ENCODE measurements at regions of chr12 and their contacts with region 1.

Region 1: DNA sequence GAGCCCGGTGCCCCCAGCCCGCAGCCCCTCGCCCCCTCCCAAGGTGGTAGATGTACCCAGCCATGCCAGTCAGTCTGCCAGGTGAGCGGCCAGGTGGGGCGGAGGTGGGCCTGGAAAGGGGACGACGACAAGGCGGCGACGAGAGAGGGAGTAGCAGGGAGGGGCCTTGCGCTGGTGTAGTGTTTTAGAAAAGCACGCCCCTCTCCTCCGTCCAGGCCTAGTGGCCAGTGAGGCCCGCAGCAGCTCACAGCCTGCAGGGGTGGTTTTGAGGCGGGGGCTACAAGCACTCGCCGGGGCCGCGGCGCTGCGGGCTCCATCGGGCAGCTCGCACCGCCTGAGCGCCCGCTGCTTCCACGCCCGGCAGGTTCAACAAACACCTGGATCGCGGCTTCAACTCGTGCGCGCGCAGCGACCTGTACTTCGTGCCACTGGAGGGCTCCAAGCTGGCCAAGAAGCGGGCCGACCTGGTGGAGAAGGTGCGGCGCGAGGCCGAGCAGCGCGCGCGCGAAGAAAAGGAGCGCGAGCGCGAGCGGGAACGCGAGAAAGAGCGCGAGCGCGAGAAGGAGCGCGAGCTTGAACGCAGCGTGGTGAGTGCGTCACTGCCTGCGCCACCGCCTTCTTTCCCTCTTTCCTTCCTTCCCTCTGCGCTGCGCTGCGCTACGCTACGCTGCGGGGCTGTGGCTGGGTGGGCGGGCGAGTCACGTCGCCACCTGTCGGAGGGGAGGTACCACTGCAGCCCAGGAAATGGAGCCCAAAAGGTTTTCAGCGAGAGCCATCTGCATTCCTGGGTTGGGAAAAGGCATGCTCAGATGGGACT is 5.9 kb upstream of the RNU7-1 start:
- DNase-seq: peak; percentile 92 to 96 (median 95)
- H3K4me3 ChIP-seq: peak overlapping the region; percentile 47 to 82
- H3K4me3 Mint-ChIP-seq: peak overlapping the region; percentile 80 to 88 (median 84)
- H3K27ac ChIP-seq: peak overlapping the region; percentile 95
- H3K27ac Mint-ChIP-seq: peak overlapping the region; percentile 93 to 99 (median 94)
- H3K4me1 ChIP-seq: peaks cover 29% of the 10 kb centered on the region
- H3K4me1 Mint-ChIP-seq: peaks cover 20 to 48% (median 35%) of the 10 kb centered on the region in 4 donors
- H3K27me3 ChIP-seq: no peaks in the 10 kb centered on the region
- H3K27me3 Mint-ChIP-seq: no peaks in the 10 kb centered on the region

Region 2: DNA sequence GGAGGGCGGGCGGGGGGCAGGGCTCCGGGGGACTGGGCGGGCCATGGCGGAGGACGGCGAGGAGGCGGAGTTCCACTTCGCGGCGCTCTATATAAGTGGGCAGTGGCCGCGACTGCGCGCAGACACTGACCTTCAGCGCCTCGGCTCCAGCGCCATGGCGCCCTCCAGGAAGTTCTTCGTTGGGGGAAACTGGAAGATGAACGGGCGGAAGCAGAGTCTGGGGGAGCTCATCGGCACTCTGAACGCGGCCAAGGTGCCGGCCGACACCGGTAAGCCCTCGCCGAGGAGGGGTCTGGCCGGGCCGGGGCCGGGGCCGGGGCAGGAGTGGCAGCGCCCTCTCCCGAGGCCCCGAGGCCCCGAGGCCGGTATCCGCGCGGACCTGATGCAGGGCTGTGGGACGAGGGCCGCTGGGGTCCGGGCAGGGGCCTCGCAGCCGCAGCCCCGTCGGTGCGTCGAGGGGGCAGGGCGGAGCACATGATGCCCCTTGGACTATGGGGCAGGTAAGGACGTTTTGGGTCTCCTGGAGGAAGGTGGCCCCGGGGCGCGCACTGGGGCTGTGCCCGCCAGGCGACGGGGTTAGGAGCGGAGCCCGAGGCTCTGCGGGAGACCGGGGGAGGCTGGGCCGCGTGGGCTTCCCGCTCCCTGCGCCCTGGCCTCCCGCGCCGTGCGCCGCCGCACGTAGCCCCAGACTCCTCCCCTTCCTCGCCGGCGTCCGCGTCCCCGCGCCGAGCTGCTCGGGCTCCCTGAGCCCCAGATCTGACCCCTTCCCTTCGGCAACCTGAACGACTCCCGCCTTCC is 70.1 kb before region 1 on chr12 and contains the start of gene TPI1:
- CTCF ChIA-PET with region 1: interaction called, 54 read pairs
- POLR2A ChIA-PET with region 1: interaction called, 70 read pairs
- intact Hi-C with region 1: loop called (anchors 1 kb)
- DNase-seq: peak; percentile 59 to 68 (median 62)
- H3K4me3 ChIP-seq: peak within 1 kb of the TSS; percentile 36 to 67
- H3K4me3 Mint-ChIP-seq: peak within 1 kb of the TSS; percentile 89 to 96 (median 92)
- H3K27ac ChIP-seq: peak within 1 kb of the TSS; percentile 69
- H3K27ac Mint-ChIP-seq: peak within 1 kb of the TSS; percentile 91 to 97 (median 93)
- H3K4me1 ChIP-seq: peaks cover 51% of the 10 kb centered on the region
- H3K4me1 Mint-ChIP-seq: peaks cover 33 to 58% (median 48%) of the 10 kb centered on the region in 4 donors
- H3K27me3 ChIP-seq: no peaks in the 10 kb centered on the region
- H3K27me3 Mint-ChIP-seq: no peaks in the 10 kb centered on the region
- total RNA-seq, gene TPI1: 155 to 164 TPM

Region 3: GRCh38 chr12:6890789-6891645 is 46.7 kb before region 1 on chr12:
- CTCF ChIA-PET with region 1: no interaction called
- POLR2A ChIA-PET with region 1: interaction called, 20 read pairs
- intact Hi-C with region 1: no loop called
- DNase-seq: peak; percentile 97 to 98 (median 98)
- H3K4me3 ChIP-seq: peak overlapping the region; percentile 74 to 93
- H3K4me3 Mint-ChIP-seq: peak overlapping the region; percentile 82 to 87 (median 85)
- H3K27ac ChIP-seq: peak overlapping the region; percentile 91
- H3K27ac Mint-ChIP-seq: peak overlapping the region; percentile 92 to 98 (median 95)
- H3K4me1 ChIP-seq: peaks cover 16% of the 10 kb centered on the region
- H3K4me1 Mint-ChIP-seq: peaks cover 5 to 15% (median 11%) of the 10 kb centered on the region in 4 donors
- H3K27me3 ChIP-seq: no peaks in the 10 kb centered on the region
- H3K27me3 Mint-ChIP-seq: no peaks in the 10 kb centered on the region

Region 4: GRCh38 chr12:6914246-6914946 is 23.3 kb before region 1 on chr12 and contains the start of gene ENO2:
- CTCF ChIA-PET with region 1: interaction called, 4 read pairs
- POLR2A ChIA-PET with region 1: interaction called, 58 read pairs
- intact Hi-C with region 1: no loop called
- DNase-seq: peak; percentile 83 to 93 (median 85)
- H3K4me3 ChIP-seq: peak within 1 kb of the TSS; percentile 69 to 76
- H3K4me3 Mint-ChIP-seq: peak within 1 kb of the TSS; percentile 90 to 98 (median 96)
- H3K27ac ChIP-seq: peak within 1 kb of the TSS; percentile 77
- H3K27ac Mint-ChIP-seq: peak within 1 kb of the TSS; percentile 88 to 98 (median 96)
- H3K4me1 ChIP-seq: peaks cover 29% of the 10 kb centered on the region
- H3K4me1 Mint-ChIP-seq: peaks cover 12 to 44% (median 27%) of the 10 kb centered on the region in 4 donors
- H3K27me3 ChIP-seq: no peaks in the 10 kb centered on the region
- H3K27me3 Mint-ChIP-seq: no peaks in the 10 kb centered on the region
- total RNA-seq, gene ENO2: 187 to 190 TPM

Region 5: GRCh38 chr12:6921996-6922946 is 15.4 kb before region 1 on chr12:
- CTCF ChIA-PET with region 1: interaction called, 77 read pairs
- POLR2A ChIA-PET with region 1: interaction called, 280 read pairs
- intact Hi-C with region 1: loop called (anchors 1 kb)
- DNase-seq: no peak
- H3K4me3 ChIP-seq: no peak overlapping the region
- H3K4me3 Mint-ChIP-seq: no peak overlapping the region
- H3K27ac ChIP-seq: no peak overlapping the region
- H3K27ac Mint-ChIP-seq: peak overlapping the region in 4 of 7 donors; percentile 30 to 95 (median 49)
- H3K4me1 ChIP-seq: peaks cover 19% of the 10 kb centered on the region
- H3K4me1 Mint-ChIP-seq: peaks cover 13 to 33% (median 20%) of the 10 kb centered on the region in 4 donors
- H3K27me3 ChIP-seq: no peaks in the 10 kb centered on the region
- H3K27me3 Mint-ChIP-seq: no peaks in the 10 kb centered on the region

Region 6: DNA sequence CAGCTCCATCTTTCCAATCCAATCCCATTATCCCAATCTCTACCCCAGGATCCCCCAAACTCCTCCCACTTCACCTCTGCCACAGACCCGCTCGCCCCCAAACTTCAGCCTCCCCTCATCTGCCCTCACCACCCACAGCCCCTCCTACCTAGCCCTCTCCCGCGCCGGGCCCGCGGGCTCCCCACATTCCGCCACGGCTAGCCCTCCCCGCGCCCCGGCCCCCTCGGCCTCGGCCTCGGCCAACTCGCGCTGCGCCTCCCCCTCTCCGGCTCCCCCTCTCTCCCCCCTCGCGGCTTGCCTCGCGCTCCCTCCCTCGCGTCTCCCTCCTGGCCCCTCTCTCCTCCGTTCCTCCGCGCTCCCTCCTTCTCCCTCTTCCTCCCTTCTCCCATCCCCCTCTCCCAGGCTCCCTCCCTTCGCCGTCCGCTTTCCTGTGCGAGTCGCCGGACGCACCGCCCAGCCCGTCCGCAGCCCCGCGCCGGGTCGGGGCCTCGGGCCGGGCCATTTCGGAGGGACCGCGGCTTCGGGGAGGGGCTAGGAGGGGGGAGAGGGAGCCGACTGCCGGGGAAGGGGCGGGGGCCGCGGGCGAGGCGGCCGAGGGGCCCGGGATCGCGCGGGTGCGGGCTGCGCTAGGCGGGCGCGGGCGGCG is 10.2 kb before region 1 on chr12 and contains the start of gene ATN1:
- CTCF ChIA-PET with region 1: interaction called, 77 read pairs
- POLR2A ChIA-PET with region 1: interaction called, 280 read pairs
- intact Hi-C with region 1: loop called (anchors 1 kb)
- DNase-seq: peak; percentile 37 to 65 (median 45)
- H3K4me3 ChIP-seq: peak within 1 kb of the TSS; percentile 57 to 65
- H3K4me3 Mint-ChIP-seq: peak within 1 kb of the TSS; percentile 88 to 94 (median 90)
- H3K27ac ChIP-seq: peak within 1 kb of the TSS; percentile 67
- H3K27ac Mint-ChIP-seq: peak within 1 kb of the TSS; percentile 91 to 97 (median 94)
- H3K4me1 ChIP-seq: peaks cover 43% of the 10 kb centered on the region
- H3K4me1 Mint-ChIP-seq: peaks cover 31 to 57% (median 43%) of the 10 kb centered on the region in 4 donors
- H3K27me3 ChIP-seq: no peaks in the 10 kb centered on the region
- H3K27me3 Mint-ChIP-seq: no peaks in the 10 kb centered on the region
- total RNA-seq, gene ATN1: 32.2 to 33.0 TPM

Region 7: GRCh38 chr12:6996040-6996441 is 58.4 kb after region 1 on chr12:
- CTCF ChIA-PET with region 1: no interaction called
- POLR2A ChIA-PET with region 1: no interaction called
- intact Hi-C with region 1: no loop called
- DNase-seq: no peak
- H3K4me3 ChIP-seq: no peak overlapping the region
- H3K4me3 Mint-ChIP-seq: no peak overlapping the region
- H3K27ac ChIP-seq: no peak overlapping the region
- H3K27ac Mint-ChIP-seq: peak overlapping the region in 1 of 7 donors; percentile 14
- H3K4me1 ChIP-seq: peaks cover 4% of the 10 kb centered on the region
- H3K4me1 Mint-ChIP-seq: peaks cover 8 to 19% (median 10%) of the 10 kb centered on the region in 4 donors
- H3K27me3 ChIP-seq: no peaks in the 10 kb centered on the region
- H3K27me3 Mint-ChIP-seq: no peaks in the 10 kb centered on the region

Region 8: GRCh38 chr12:7018350-7019042 is 80.8 kb after region 1 on chr12 and contains the start of gene LPCAT3:
- CTCF ChIA-PET with region 1: interaction called, 7 read pairs
- POLR2A ChIA-PET with region 1: interaction called, 48 read pairs
- intact Hi-C with region 1: no loop called
- DNase-seq: peak; percentile 98 to 99 (median 98)
- H3K4me3 ChIP-seq: peak within 1 kb of the TSS; percentile 72 to 76
- H3K4me3 Mint-ChIP-seq: peak within 1 kb of the TSS; percentile 86 to 99 (median 95)
- H3K27ac ChIP-seq: peak within 1 kb of the TSS; percentile 85
- H3K27ac Mint-ChIP-seq: peak within 1 kb of the TSS; percentile 90 to 98 (median 95)
- H3K4me1 ChIP-seq: peaks cover 23% of the 10 kb centered on the region
- H3K4me1 Mint-ChIP-seq: peaks cover 18 to 37% (median 24%) of the 10 kb centered on the region in 4 donors
- H3K27me3 ChIP-seq: no peaks in the 10 kb centered on the region
- H3K27me3 Mint-ChIP-seq: no peaks in the 10 kb centered on the region
- total RNA-seq, gene LPCAT3: 18.3 to 21.6 TPM

Measured in CD4-positive, alpha-beta memory T cell (primary cell).